Activated T-helper 1 cell treated with anti-CD3 and anti-CD28 coated beads, Interleukin-12 subunit alpha, Interleukin-12 subunit beta, Interleukin-2, Interleukin-4 antibody, amounts not matched to agents 30 ng/mL and 10 ng/mL and 1 ng/mL, durations not matched to agents 14 hours and 24 hours and 36 hours (primary cell): ENCODE measurements at regions of chr9 and their contacts with region 1.

Region 1: DNA sequence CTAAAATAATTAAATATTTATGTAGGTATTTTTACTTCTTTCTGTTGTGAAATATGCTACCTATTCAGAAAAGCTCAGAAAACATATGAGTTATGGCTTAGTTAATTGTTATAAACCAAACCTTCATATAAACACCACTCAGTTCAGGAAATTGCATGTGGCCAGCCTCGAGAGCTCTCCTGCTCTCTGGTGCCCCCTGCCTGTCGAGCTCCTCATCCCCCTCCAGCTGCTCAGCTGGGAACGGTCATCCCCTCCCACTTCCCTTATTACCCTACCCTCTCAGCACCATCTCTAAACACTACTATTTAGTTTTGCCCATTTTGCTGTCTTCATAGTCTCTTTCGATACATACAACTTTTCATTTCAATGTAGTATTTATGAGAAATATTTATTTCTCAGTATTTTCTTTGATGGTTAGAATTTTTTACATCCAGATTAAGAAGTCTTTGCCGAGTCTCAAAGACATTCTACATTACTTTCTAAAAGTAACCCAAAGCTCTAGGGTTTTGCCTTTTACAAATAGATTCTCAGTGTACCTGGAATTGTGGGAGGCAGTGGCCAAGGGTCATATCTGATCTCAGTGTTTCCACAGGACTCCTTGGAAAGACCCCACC is 51.2 kb upstream of the SEMA4D start:
- DNase-seq: peak; percentile 73
- H3K4me3 Mint-ChIP-seq: no peak overlapping the region
- H3K27ac Mint-ChIP-seq: peak overlapping the region; percentile 29
- H3K4me1 Mint-ChIP-seq: peaks cover 30% of the 10 kb centered on the region
- H3K27me3 Mint-ChIP-seq: peaks cover 15% of the 10 kb centered on the region

Region 2: DNA sequence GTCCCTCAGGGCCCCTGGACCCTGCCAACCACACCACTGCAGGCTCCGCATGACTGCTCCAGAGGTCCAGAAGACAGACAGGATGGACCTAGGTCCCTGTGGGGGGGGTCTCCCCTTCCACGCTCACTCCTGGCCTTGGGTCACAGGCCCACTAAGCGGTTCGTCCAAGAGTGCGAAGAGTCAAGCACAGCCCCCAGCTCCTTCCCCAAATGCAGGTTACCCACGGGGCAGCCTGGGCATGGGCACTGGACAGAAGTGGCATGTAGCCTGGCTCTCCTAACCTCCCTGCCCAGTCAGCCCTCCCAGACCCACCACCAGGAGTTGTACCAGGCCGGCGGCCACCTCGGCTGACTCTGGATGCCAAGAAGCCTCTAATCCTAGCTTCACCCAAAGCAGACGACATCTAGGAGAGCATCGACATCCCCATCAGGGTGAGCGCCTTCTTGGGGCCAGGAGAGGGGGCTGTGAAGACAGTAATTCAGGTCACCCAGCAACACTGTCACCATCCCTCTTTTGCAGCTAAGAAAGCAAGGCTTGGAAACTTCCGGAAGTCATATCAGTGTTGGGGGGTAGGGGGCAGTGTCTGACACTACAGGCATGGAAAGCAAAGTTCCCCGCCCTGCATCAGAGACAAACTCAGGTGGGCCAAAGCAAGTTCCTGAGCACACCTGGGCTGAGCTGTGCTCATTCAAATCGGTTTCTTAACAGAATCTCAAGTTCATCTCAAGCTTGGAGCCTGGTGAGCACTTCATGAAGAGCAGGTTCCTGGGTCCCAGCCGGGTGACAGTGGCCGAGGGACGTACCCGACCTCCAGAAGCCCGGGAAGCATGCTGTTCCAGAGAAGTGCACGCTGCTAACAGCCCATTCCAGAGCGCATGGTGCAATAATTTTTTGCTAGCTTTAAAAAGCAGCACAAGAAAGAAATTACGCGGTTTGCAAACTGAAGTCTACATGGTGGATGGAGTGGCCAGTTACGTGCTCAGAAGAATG is 119.9 kb before region 1 on chr9:
- intact Hi-C with region 1: loop called (anchors 1 kb)
- DNase-seq: no peak
- H3K4me3 Mint-ChIP-seq: no peak overlapping the region
- H3K27ac Mint-ChIP-seq: peak overlapping the region; percentile 100
- H3K4me1 Mint-ChIP-seq: peaks cover 91% of the 10 kb centered on the region
- H3K27me3 Mint-ChIP-seq: no peaks in the 10 kb centered on the region

Region 3: GRCh38 chr9:89466451-89467277 is 82.5 kb before region 1 on chr9:
- intact Hi-C with region 1: loop called (anchors 1 kb)
- DNase-seq: peak; percentile 44
- H3K4me3 Mint-ChIP-seq: peak overlapping the region; percentile 73
- H3K27ac Mint-ChIP-seq: peak overlapping the region; percentile 98
- H3K4me1 Mint-ChIP-seq: peaks cover 93% of the 10 kb centered on the region
- H3K27me3 Mint-ChIP-seq: no peaks in the 10 kb centered on the region